T-cell (primary cell): ENCODE measurements at regions of chr2 and their contacts with region 1.

Region 1: DNA sequence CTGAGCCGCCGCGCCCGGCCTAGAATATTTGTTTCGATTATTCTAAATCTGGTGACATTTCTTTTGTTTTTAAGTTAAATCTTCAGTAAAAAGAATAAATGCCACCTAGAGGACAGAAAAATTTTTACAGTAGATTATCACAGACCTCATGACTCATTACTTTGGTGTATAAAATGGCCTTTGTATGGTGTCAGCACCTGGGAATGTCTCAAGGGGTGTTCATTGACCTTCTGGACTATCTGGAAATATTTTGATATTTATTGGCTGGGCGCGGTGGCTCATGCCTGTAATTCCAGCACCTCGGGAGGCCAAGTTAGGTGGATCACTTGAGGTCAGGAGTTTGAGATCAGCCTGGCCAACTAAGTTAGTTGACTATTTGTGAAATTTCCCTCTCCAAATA is 30.3 kb upstream of the SLC30A6 start:
- DNase-seq: peak in 1 of 35 experiments; percentile 25
- ATAC-seq: peak in 3 of 4 experiments; percentile 26 to 43 (median 34)
- H3K4me3 ChIP-seq: no peak overlapping the region
- H3K4me3 Mint-ChIP-seq: no peak overlapping the region
- H3K27ac ChIP-seq: no peak overlapping the region
- H3K27ac Mint-ChIP-seq: no peak overlapping the region
- H3K4me1 ChIP-seq: no peaks in the 10 kb centered on the region
- H3K4me1 Mint-ChIP-seq: no peaks in the 10 kb centered on the region
- H3K27me3 ChIP-seq: no peaks in the 10 kb centered on the region
- H3K27me3 Mint-ChIP-seq: no peaks in the 10 kb centered on the region

Region 2: GRCh38 chr2:32314886-32315285 is 179.5 kb after region 1 on chr2:
- CTCF ChIA-PET with region 1: interaction called in 1 of 2 experiments, 11 read pairs
- POLR2A ChIA-PET with region 1: no interaction called
- DNase-seq: no peak
- ATAC-seq: no peak
- H3K4me3 ChIP-seq: no peak overlapping the region
- H3K4me3 Mint-ChIP-seq: no peak overlapping the region
- H3K27ac ChIP-seq: no peak overlapping the region
- H3K27ac Mint-ChIP-seq: no peak overlapping the region
- H3K4me1 ChIP-seq: no peaks in the 10 kb centered on the region
- H3K4me1 Mint-ChIP-seq: no peaks in the 10 kb centered on the region
- H3K27me3 ChIP-seq: no peaks in the 10 kb centered on the region
- H3K27me3 Mint-ChIP-seq: no peaks in the 10 kb centered on the region